ENCODE measurements at regions of chr1 and their contacts with region 1.

Region 1: DNA sequence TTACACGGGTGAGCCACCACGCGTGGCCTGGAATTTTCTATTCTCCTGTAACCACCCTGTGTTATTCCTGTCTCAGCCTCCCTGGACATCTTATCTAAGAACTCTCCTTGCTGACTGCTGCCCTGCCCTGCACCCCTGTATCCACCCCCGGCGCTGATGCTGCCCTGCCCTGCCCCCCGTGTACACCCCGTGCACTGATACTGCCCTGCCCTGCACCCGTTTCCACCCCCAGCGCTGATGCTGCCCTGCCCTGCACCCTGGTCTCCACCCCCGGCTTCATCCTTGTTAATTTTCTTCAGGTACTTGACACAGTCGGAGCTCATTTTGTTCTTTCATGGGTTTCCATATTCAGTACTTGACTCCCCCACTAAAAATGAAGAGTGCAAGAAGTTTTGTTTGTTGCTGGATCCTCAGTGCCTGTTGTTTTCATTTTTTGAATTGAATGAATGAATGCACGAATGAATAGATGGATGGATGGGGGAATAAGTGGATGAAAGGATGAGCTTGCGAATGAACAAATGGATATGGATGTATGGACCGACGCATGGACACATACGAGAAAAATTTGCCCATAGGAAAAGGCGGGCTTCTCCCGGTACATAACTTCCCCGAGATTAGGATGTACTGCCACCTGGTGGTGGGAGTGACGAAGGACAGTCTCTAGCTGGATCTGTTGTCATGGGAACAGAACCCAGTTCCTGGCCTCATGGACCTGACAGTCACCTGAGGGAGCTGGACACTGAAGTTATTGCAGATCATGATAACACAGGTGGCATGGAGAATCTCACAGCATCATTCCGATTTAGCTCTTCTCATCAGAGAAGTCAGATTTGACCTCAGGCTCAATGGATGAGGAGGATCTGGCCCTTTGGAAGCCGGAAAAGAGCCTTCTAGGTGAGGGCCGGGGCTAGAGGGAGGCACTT is 14.9 kb downstream of the AADACL4 start:
- DNase-seq: peak; percentile 71
- ATAC-seq: peak; percentile 96
- H3K4me3 ChIP-seq: no peak overlapping the region
- H3K27ac ChIP-seq: no peak overlapping the region; the same call in 1 of the 2 replicates
- H3K4me1 ChIP-seq: peaks cover 5% of the 10 kb centered on the region; the same call in 1 of the 2 replicates
- H3K27me3 ChIP-seq: no peaks in the 10 kb centered on the region
- CTCF ChIP-seq: peak; percentile 94

Region 2: GRCh38 chr1:12275369-12275768 is 383.4 kb before region 1 on chr1:
- CTCF ChIA-PET with region 1: interaction called, 4 read pairs
- POLR2A ChIA-PET with region 1: no interaction called
- in situ Hi-C with region 1: no loop called
- intact Hi-C with region 1: loop called (anchors 5 kb)
- DNase-seq: no peak
- ATAC-seq: peak; percentile 62; the same call in 1 of the 2 replicates
- H3K4me3 ChIP-seq: no peak overlapping the region
- H3K27ac ChIP-seq: no peak overlapping the region
- H3K4me1 ChIP-seq: peaks cover 9% of the 10 kb centered on the region
- H3K27me3 ChIP-seq: no peaks in the 10 kb centered on the region
- CTCF ChIP-seq: peak; percentile 89

Region 3: DNA sequence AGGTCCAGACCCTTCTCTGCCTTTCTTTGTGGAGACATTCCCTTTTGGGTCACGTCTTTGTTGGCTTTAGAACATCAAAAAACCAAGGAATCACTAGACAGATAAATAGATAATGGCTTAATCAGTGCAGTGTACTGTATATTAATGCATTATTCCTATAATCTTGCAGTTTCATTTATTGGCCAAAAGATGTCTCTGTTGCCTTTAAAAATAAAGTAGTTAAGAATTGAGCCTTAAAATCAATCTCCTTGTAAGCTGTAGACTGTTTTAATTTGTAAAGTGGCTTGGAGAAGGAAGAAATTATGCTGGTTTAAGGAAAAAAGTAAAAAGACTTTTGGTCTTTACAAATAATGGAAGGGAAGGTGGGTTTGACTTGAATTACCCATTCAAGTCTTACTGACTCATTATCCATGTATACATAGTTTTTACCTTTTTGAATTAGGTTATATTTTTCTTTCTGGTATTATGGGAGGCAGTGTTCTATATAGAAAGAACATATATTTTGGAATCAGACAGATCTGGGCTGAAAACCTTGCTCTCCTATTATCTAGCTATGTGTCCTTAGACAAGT is 344.4 kb before region 1 on chr1:
- CTCF ChIA-PET with region 1: no interaction called
- POLR2A ChIA-PET with region 1: no interaction called
- in situ Hi-C with region 1: no loop called
- intact Hi-C with region 1: loop called (anchors 2 kb)
- DNase-seq: no peak
- ATAC-seq: peak; percentile 78; the same call in 1 of the 2 replicates
- H3K4me3 ChIP-seq: no peak overlapping the region
- H3K27ac ChIP-seq: peak overlapping the region; percentile 72
- H3K4me1 ChIP-seq: peaks cover 6% of the 10 kb centered on the region
- H3K27me3 ChIP-seq: no peaks in the 10 kb centered on the region
- CTCF ChIP-seq: peak; percentile 59; the same call in 1 of the 2 replicates

Region 4: GRCh38 chr1:12477936-12478611 is 180.7 kb before region 1 on chr1:
- CTCF ChIA-PET with region 1: no interaction called
- POLR2A ChIA-PET with region 1: no interaction called
- in situ Hi-C with region 1: no loop called
- intact Hi-C with region 1: loop called (anchors 5 kb)
- DNase-seq: peak; percentile 78
- ATAC-seq: peak; percentile 91
- H3K4me3 ChIP-seq: no peak overlapping the region
- H3K27ac ChIP-seq: peak overlapping the region; percentile 99
- H3K4me1 ChIP-seq: peaks cover 64% of the 10 kb centered on the region
- H3K27me3 ChIP-seq: no peaks in the 10 kb centered on the region
- CTCF ChIP-seq: no peak

Region 5: GRCh38 chr1:12619792-12620487 is 38.9 kb before region 1 on chr1:
- CTCF ChIA-PET with region 1: interaction called, 3 read pairs
- POLR2A ChIA-PET with region 1: no interaction called
- in situ Hi-C with region 1: no loop called
- intact Hi-C with region 1: loop called (anchors 5 kb)
- DNase-seq: peak; percentile 69
- ATAC-seq: peak; percentile 69
- H3K4me3 ChIP-seq: peak overlapping the region; percentile 92 to 95
- H3K27ac ChIP-seq: peak overlapping the region; percentile 95
- H3K4me1 ChIP-seq: peaks cover 47% of the 10 kb centered on the region
- H3K27me3 ChIP-seq: no peaks in the 10 kb centered on the region
- CTCF ChIP-seq: peak; percentile 97

Region 6: GRCh38 chr1:12630946-12631530 is 27.8 kb before region 1 on chr1:
- CTCF ChIA-PET with region 1: interaction called, 11 read pairs
- POLR2A ChIA-PET with region 1: no interaction called
- in situ Hi-C with region 1: no loop called
- intact Hi-C with region 1: no loop called
- DNase-seq: no peak
- ATAC-seq: peak; percentile 31; the same call in 1 of the 2 replicates
- H3K4me3 ChIP-seq: no peak overlapping the region
- H3K27ac ChIP-seq: no peak overlapping the region
- H3K4me1 ChIP-seq: peaks cover 4% of the 10 kb centered on the region; the same call in 1 of the 2 replicates
- H3K27me3 ChIP-seq: no peaks in the 10 kb centered on the region
- CTCF ChIP-seq: no peak